AG04450 (cell line): ENCODE measurements at regions of chr2 and their contacts with region 1.

Region 1: GRCh38 chr2:38554973-38555595 is 47.6 kb downstream of the HNRNPLL start:
- DNase-seq: no peak
- H3K4me3 ChIP-seq: no peak overlapping the region
- H3K27ac ChIP-seq: no peak overlapping the region
- H3K27me3 ChIP-seq: no peaks in the 10 kb centered on the region
- CTCF ChIP-seq: peak; percentile 61

Region 2: GRCh38 chr2:38565333-38565732 is 10.2 kb after region 1 on chr2:
- CTCF ChIA-PET with region 1: interaction called, 12 read pairs
- POLR2A ChIA-PET with region 1: no interaction called
- DNase-seq: no peak
- H3K4me3 ChIP-seq: no peak overlapping the region
- H3K27ac ChIP-seq: no peak overlapping the region
- H3K27me3 ChIP-seq: no peaks in the 10 kb centered on the region
- CTCF ChIP-seq: no peak

Region 3: GRCh38 chr2:38709567-38710194 is 154.6 kb after region 1 on chr2:
- CTCF ChIA-PET with region 1: no interaction called
- POLR2A ChIA-PET with region 1: no interaction called
- DNase-seq: no peak
- H3K4me3 ChIP-seq: no peak overlapping the region
- H3K27ac ChIP-seq: no peak overlapping the region
- H3K27me3 ChIP-seq: no peaks in the 10 kb centered on the region
- CTCF ChIP-seq: no peak